Activated CD8-positive, alpha-beta memory T cell treated with anti-CD3 and anti-CD28 coated beads, Interleukin-2, amount 10 ng/mL, durations not matched to agents 7 days and 5 days (primary cell): ENCODE measurements at regions of chr20 and their contacts with region 1.

Region 1: DNA sequence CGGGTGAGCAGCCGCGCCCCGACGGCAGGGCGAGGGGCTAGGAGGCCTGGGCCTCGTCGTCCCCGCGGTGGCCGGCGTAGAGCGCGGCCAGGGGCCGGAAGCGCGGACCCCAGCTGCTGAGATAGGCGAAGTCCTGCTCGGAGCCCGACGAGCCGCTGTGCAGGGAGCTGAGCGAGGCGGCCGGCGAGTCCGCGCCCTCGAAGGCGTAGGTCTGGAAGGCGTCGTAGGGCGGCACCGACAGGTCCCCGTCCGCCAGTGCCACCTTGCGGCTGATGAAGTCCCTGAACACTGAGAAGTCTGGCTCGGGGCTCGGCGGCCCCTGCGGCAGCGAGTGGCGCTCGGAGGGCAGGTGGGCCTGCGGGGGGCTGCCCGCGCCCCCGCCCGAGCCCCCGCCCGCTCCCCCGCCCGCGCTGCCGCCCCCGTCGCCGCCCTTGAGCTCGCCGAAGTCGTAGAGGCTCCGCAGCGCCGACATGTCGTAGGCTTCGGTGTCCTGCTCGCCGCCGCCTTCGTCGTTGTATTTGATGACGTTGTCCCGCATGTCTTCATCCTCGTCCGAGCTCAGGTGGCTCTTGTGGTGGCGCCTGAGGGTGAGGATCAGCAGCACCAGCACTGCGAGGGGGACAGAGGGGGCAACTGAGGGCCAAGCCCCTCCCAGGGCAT is 56.5 kb downstream of the CD40 start:
- DNase-seq: peak; percentile 76
- ATAC-seq: peak; percentile 88
- H3K4me3 Mint-ChIP-seq: no peak overlapping the region
- H3K27ac Mint-ChIP-seq: no peak overlapping the region
- H3K4me1 Mint-ChIP-seq: no peaks in the 10 kb centered on the region
- H3K27me3 Mint-ChIP-seq: peaks cover 56% of the 10 kb centered on the region

Region 2: GRCh38 chr20:46022411-46023147 is 152.0 kb before region 1 on chr20:
- CTCF ChIA-PET with region 1: interaction called, 10 read pairs
- DNase-seq: peak; percentile 82
- ATAC-seq: peak; percentile 61
- H3K4me3 Mint-ChIP-seq: peak overlapping the region; percentile 70
- H3K27ac Mint-ChIP-seq: no peak overlapping the region
- H3K4me1 Mint-ChIP-seq: peaks cover 19% of the 10 kb centered on the region
- H3K27me3 Mint-ChIP-seq: peaks cover 46% of the 10 kb centered on the region

Region 3: DNA sequence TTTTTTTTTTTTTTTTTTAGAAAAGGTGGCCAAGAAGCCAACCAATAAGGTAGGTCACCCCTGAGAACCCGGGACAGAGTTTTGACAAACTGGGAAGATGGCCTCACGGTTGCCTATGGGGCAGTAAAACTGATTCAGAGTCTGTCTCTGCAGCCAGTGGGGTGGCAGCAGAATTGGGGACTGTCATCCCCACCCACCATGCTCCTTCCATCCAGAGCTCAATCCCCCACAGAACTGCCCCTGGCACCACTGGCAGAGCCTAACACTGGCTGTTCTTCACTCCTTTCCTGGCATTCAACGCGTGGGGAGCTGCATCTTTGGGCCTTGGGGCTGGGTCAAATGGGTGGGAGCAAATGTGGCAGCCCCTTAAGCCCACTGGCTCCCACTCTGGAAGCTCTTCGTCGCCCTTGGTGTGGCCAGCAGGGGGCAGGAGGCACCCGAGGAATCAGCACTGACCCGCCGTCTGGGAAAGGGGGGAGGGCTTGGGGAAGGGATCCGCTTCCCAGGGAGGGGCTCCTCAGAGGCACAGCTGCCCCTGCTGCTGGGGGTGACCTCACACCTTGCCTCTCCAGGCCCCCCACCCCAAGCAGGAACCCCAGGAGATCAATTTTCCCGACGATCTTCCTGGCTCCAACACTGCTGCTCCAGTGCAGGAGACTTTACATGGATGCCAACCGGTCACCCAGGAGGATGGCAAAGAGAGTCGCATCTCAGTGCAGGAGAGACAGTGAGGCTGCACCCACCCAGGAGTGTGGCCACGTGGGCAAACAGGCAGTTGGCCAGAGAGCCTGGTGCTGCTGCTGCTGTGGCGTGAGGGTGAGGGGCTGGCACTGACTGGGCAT is 46.1 kb before region 1 on chr20:
- CTCF ChIA-PET with region 1: interaction called, 20 read pairs
- DNase-seq: no peak
- ATAC-seq: no peak
- H3K4me3 Mint-ChIP-seq: no peak overlapping the region
- H3K27ac Mint-ChIP-seq: no peak overlapping the region
- H3K4me1 Mint-ChIP-seq: no peaks in the 10 kb centered on the region
- H3K27me3 Mint-ChIP-seq: peaks cover 36% of the 10 kb centered on the region